Naive thymus-derived CD4-positive, alpha-beta T cell (primary cell): ENCODE measurements at regions of chr9 and their contacts with region 1.

Region 1: GRCh38 chr9:135830496-135830895 is 76.8 kb downstream of the CAMSAP1 start:
- DNase-seq: no peak
- ATAC-seq: no peak
- H3K4me3 ChIP-seq: no peak overlapping the region
- H3K4me3 Mint-ChIP-seq: no peak overlapping the region
- H3K27ac ChIP-seq: no peak overlapping the region
- H3K27ac Mint-ChIP-seq: peak overlapping the region in 1 of 9 donors; percentile 5
- H3K4me1 ChIP-seq: no peaks in the 10 kb centered on the region
- H3K4me1 Mint-ChIP-seq: peaks cover 0 to 30% (median 18%) of the 10 kb centered on the region in 7 donors
- H3K27me3 ChIP-seq: no peaks in the 10 kb centered on the region
- H3K27me3 Mint-ChIP-seq: no peaks in the 10 kb centered on the region

Region 2: DNA sequence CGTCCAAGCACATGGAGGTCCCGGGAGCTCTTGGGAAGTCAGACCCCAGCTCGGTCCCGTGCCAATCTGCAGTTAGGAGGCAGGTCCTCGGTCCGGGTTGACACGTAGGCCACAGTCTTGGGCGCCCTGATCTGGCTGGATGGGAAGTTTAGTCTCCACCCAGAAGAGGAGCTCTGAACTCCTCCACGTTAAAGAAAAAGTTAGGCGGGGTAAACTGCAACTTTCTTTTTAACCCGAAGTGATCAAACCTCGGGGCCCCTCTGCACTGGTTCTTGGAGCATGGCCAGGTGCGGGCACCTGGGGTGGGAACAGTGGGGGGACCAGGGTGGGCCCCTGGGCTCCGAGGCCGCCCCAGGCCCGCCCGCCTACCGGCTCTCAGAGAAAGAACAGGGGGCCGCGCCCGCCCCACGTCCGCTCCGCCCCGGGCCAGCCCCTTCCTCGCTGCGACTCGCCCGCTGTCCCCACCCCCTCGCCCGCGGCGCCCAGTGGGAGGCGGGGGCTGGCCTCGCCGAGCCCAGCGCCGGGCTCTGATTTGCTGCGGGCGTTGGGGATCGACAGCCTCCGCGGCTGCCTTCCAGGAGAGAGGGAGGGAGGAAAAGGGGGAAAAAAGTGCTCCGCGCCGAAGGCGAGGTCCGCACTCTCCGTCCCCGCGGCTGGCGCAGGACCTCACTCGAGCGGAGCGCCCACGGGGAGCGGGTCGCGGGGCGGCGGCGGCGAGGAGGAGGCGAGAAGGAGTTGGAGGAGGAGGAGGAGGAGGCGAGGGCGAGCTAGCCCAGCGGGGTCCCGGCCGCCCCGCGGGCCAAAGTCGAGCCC is 1189.1 kb before region 1 on chr9 and contains the start of gene COL5A1:
- CTCF ChIA-PET with region 1: no interaction called
- POLR2A ChIA-PET with region 1: no interaction called
- intact Hi-C with region 1: loop called in 1 of 2 experiments (anchors 10 kb)
- DNase-seq: peak in 8 of 9 donors; percentile 10 to 55 (median 39)
- ATAC-seq: peak; percentile 88
- H3K4me3 ChIP-seq: peak within 1 kb of the TSS; percentile 35
- H3K4me3 Mint-ChIP-seq: peak within 1 kb of the TSS in 9 of 10 donors; percentile 42 to 78 (median 70)
- H3K27ac ChIP-seq: no peak within 1 kb of the TSS
- H3K27ac Mint-ChIP-seq: no peak within 1 kb of the TSS
- H3K4me1 ChIP-seq: no peaks in the 10 kb centered on the region
- H3K4me1 Mint-ChIP-seq: peaks cover 0 to 6% (median 0%) of the 10 kb centered on the region in 7 donors
- H3K27me3 ChIP-seq: no peaks in the 10 kb centered on the region
- H3K27me3 Mint-ChIP-seq: peaks cover 7 to 35% (median 12%) of the 10 kb centered on the region in 5 donors
- total RNA-seq, gene COL5A1: 0.16 to 0.56 (median 0.24) TPM

Region 3: DNA sequence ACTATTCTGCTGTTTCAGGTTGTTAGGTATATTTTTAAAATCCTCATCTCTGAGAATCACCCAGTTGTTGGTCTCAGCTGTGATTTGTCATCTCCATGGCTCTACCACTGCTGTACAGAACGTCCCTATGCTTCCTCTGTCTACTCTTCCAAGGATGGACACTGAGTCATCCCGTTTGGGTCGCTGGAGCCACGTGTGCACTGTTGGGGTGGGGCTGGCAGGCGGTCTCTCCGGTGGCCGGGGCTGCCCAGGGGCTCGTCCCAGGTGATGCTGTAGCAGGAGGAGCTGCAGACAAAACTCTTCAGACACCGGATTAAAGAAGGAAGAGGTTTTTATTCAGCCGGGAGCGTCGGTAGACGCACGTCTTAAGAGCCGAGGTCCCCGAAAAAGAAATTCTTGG is 150.4 kb before region 1 on chr9:
- CTCF ChIA-PET with region 1: no interaction called
- POLR2A ChIA-PET with region 1: no interaction called
- intact Hi-C with region 1: no loop called
- DNase-seq: no peak
- ATAC-seq: no peak
- H3K4me3 ChIP-seq: no peak overlapping the region
- H3K4me3 Mint-ChIP-seq: no peak overlapping the region
- H3K27ac ChIP-seq: no peak overlapping the region
- H3K27ac Mint-ChIP-seq: no peak overlapping the region
- H3K4me1 ChIP-seq: no peaks in the 10 kb centered on the region
- H3K4me1 Mint-ChIP-seq: no peaks in the 10 kb centered on the region
- H3K27me3 ChIP-seq: no peaks in the 10 kb centered on the region
- H3K27me3 Mint-ChIP-seq: peaks cover 0 to 13% (median 4%) of the 10 kb centered on the region in 5 donors

Region 4: GRCh38 chr9:136211441-136212344 is 381.2 kb after region 1 on chr9:
- CTCF ChIA-PET with region 1: no interaction called
- POLR2A ChIA-PET with region 1: no interaction called
- intact Hi-C with region 1: no loop called
- DNase-seq: no peak
- ATAC-seq: no peak
- H3K4me3 ChIP-seq: no peak overlapping the region
- H3K4me3 Mint-ChIP-seq: no peak overlapping the region
- H3K27ac ChIP-seq: no peak overlapping the region
- H3K27ac Mint-ChIP-seq: no peak overlapping the region
- H3K4me1 ChIP-seq: no peaks in the 10 kb centered on the region
- H3K4me1 Mint-ChIP-seq: no peaks in the 10 kb centered on the region
- H3K27me3 ChIP-seq: no peaks in the 10 kb centered on the region
- H3K27me3 Mint-ChIP-seq: no peaks in the 10 kb centered on the region